ENCODE measurements at regions of chr2 and their contacts with region 1.

Region 1: DNA sequence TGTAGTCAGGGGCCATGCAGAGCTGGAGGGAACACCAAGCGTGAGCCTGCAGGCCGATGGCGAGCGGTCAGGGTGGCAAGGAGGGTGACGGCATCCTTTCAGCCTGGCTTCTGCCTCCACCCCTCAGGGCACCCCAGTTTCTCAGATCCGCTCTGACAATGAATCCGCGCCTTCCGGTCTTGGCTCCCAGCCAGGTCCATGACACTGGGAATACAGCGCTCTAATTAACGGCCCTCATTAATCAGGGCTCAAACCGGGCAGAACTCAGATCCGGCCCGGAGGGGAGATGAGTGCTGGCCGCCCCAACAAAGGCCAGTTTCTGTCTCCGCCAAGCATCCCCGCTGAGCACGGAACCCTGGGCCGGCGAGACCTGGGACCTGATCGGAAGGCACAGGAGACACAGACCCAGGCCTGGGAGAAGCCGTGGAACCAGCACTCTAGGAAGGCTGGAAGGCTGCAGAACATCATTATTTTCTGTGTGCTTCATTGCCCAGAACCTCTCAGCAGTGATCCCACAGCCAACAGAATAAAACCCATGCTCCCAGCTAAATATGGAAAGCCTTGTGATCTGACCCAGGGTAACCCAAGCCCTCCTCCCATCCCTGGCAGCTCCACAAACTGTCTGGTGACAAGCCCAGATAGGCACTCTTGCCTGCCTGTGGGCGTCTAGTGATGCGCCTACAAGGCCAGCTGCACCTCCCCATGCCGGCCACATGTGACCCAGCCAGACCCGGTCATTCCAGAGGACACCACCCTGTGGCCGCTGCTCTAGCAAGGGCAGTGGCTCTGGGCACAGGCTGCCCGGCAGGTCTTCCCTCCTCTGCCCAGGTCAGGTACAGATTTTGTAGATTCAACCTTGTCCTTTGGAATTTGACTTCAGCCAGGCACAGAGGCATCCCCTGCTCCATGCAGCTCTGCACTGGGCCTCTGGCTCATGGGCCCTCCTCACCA is 438.7 kb upstream of the MYT1L start:
- DNase-seq: peak; percentile 78
- ATAC-seq: peak; percentile 97

Region 2: GRCh38 chr2:2516386-2516785 is 253.4 kb before region 1 on chr2:
- intact Hi-C with region 1: loop called (anchors 10 kb)
- DNase-seq: no peak
- ATAC-seq: no peak

Region 3: DNA sequence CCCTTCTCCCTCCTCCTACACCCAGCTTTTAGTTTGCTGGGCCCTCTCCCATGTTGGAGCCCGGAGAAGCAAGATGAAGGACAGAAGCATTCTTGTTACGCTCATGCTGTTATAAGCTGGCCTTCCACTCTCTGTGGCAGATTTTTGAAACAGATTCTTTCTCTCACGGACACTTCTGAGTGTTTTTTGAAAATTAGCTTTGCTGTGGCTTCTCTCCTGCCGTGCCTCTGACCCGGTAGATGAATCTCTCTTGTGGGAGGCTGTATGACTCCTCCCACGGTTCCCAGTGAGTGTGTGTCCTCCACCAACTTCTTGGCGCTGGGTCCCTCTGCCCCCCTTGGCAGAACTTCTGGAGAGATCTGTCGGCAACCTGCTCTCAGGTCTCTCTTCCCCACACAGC is 169.4 kb before region 1 on chr2:
- intact Hi-C with region 1: no loop called
- DNase-seq: no peak
- ATAC-seq: no peak

Region 4: GRCh38 chr2:2662037-2662850 is 107.5 kb before region 1 on chr2:
- intact Hi-C with region 1: loop called (anchors 2 kb)
- DNase-seq: no peak
- ATAC-seq: peak; percentile 90

Region 5: GRCh38 chr2:2810504-2810903 is 40.7 kb after region 1 on chr2:
- intact Hi-C with region 1: no loop called
- DNase-seq: no peak
- ATAC-seq: no peak

Region 6: DNA sequence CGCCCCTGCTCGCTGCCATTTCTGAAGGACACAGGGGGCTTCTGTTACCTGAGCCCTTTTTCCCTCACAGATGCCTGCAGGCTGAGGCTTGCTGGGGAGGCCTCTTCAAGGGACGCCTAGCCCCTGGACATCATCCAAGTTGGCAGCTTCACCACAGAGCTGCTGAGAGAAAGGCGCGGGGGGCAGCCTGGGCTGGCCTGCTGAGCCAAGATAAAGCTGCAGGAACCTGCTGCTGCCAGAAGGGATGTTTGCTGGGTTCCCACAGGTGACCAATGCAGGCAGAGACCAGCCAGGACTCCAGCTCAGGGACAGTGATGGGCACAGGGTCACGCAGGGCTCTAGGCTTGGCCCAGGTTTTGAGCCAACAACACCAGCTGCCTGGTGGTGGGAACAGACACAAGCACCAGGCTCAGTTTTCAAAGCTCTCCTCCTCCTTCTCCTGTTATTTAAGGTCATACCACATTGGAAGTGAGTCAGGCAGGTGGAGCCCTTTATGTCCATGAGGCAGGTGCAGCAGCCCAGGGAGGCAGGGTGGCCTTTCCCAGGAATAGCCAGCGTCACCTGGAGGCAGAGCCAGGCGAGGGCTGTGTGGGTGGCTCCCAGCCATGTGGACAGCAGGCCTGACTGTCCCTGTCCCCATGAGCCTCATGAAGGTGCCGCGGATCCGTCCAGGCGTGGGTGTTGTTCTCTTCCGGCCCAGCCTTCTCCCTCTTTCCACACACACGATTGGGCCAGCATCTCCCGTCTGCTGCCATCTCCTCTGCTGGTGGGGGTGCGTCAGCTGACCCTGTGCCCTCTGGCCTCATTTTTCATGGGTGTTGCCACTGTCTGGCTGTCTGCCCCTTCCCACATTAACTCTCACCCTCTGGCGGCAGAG is 76.8 kb after region 1 on chr2:
- intact Hi-C with region 1: loop called (anchors 2 kb)
- DNase-seq: no peak
- ATAC-seq: peak; percentile 62

Measured in Right ventricle myocardium inferior (tissue), 1 donor.